ENCODE measurements at regions of chr7 and their contacts with region 1.

Region 1: GRCh38 chr7:136009488-136010079 is 32.4 kb upstream of the MTPN start:
- DNase-seq: peak in 1 of 35 experiments; percentile 71
- ATAC-seq: no peak
- H3K4me3 ChIP-seq: no peak overlapping the region
- H3K4me3 Mint-ChIP-seq: no peak overlapping the region
- H3K27ac ChIP-seq: no peak overlapping the region
- H3K27ac Mint-ChIP-seq: no peak overlapping the region
- H3K4me1 ChIP-seq: no peaks in the 10 kb centered on the region
- H3K4me1 Mint-ChIP-seq: peaks cover 5 to 8% (median 7%) of the 10 kb centered on the region in 3 donors
- H3K27me3 ChIP-seq: no peaks in the 10 kb centered on the region
- H3K27me3 Mint-ChIP-seq: peaks cover 6 to 14% of the 10 kb centered on the region in 2 donors

Region 2: GRCh38 chr7:135801045-135801693 is 208.4 kb before region 1 on chr7:
- CTCF ChIA-PET with region 1: interaction called, 13 to 15 read pairs
- POLR2A ChIA-PET with region 1: no interaction called
- DNase-seq: peak in 15 of 35 experiments; percentile 6 to 77 (median 21)
- ATAC-seq: peak; percentile 38 to 72 (median 56)
- H3K4me3 ChIP-seq: no peak overlapping the region
- H3K4me3 Mint-ChIP-seq: no peak overlapping the region
- H3K27ac ChIP-seq: no peak overlapping the region
- H3K27ac Mint-ChIP-seq: no peak overlapping the region
- H3K4me1 ChIP-seq: peaks cover 0 to 4% of the 10 kb centered on the region in 2 experiments
- H3K4me1 Mint-ChIP-seq: peaks cover 8 to 10% (median 10%) of the 10 kb centered on the region in 3 donors
- H3K27me3 ChIP-seq: peaks cover 0 to 14% of the 10 kb centered on the region in 2 experiments
- H3K27me3 Mint-ChIP-seq: peaks cover 5 to 18% of the 10 kb centered on the region in 2 donors

Measured in T-cell (primary cell).